ENCODE measurements at regions of chr2 and their contacts with region 1.

Region 1: DNA sequence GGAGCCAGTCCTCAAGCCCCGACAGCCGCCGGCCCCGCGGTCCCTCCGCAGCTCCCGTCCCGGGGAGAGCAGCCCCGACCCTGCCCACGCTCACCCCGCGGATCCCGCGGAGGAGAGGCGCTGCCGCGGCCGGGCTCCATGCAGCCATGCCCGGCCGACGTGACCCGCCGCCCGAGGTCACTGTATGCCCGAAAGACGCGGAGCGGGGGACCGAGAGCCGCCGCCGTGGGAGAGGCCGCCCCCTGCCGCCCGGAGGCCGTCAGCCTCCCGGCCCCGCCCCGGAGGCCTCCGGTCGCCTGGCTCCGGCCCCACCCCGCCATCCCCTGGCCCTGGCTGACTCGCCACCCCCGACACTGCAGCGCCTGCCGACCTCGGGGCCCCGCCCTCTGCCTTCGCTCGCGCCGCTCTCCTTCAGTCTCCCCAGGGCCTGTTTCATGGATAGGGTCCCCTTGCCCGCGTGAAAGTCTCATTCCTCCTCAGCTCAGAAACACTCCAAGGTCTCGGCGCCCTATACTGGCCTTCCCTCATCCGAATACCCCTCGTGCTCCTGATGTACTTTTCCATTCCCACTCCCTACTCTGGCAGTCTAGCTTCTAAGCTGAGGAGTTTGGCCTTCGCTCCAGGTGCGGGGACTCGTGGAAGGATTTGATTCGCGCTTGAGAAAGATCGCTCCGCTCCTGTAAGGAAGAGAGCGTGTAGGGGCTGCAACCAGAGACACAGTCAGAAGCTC is at the start of gene BOLA3:
- DNase-seq: peak; percentile 94 to 97 (median 97)
- ATAC-seq: peak; percentile 94
- H3K4me3 ChIP-seq: peak within 1 kb of the TSS; percentile 64
- H3K27ac ChIP-seq: peak within 1 kb of the TSS; percentile 80
- H3K4me1 ChIP-seq: peaks cover 31 to 36% of the 10 kb centered on the region in 2 experiments
- H3K27me3 ChIP-seq: no peaks in the 10 kb centered on the region
- CTCF ChIP-seq: peak; percentile 68 to 97 (median 88)
- EP300 ChIP-seq: 0 out of 2 replicates have a peak, but pooled peaks have one; percentile 16
- POLR2A ChIP-seq: peak; percentile 88
- RAD21 ChIP-seq: peak; percentile 54 to 63
- polyA plus RNA-seq, gene BOLA3: 328 to 385 TPM

Region 2: DNA sequence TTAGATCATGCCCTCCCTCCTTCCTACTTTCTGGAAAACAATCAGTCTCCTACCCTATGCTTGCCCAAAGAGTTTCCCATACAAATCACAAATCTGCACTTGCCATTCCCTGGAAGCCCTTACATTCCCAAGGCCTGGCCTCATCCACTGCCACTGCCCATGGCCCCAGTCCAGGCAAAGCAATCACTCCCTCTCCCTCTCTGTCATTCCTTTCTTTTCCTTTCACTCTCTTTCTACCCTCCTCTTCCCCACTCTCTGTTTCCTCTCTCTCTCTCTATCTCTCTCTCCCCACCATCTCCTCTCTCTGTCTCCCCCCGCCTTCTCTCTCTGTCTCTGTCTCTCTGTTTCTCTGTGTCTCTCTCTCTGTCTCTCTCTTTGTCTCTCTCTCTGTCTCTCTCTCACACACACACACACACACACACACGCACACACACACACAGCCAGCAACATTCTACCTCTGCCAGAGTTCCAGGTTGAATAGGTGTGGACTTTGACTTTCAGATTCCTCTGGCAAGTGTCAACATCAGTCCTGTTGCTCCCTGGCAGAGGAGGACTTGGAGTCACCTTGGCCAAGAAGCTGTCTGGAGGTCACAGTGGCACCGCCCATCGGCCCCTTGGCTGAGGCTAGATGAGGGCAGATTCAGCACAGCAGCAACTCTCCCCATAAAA is 462.0 kb before region 1 on chr2:
- CTCF ChIA-PET with region 1: no interaction called
- POLR2A ChIA-PET with region 1: interaction called, 3 read pairs
- in situ Hi-C with region 1: no loop called
- intact Hi-C with region 1: loop called (anchors 10 kb)
- DNase-seq: no peak
- ATAC-seq: no peak
- H3K4me3 ChIP-seq: no peak overlapping the region
- H3K27ac ChIP-seq: no peak overlapping the region
- H3K4me1 ChIP-seq: no peaks in the 10 kb centered on the region
- H3K27me3 ChIP-seq: no peaks in the 10 kb centered on the region
- CTCF ChIP-seq: no peak
- EP300 ChIP-seq: no peak
- POLR2A ChIP-seq: no peak
- RAD21 ChIP-seq: no peak

Region 3: GRCh38 chr2:73828818-73829570 is 318.9 kb before region 1 on chr2 and contains the start of gene STAMBP:
- CTCF ChIA-PET with region 1: no interaction called
- POLR2A ChIA-PET with region 1: no interaction called
- in situ Hi-C with region 1: no loop called
- intact Hi-C with region 1: loop called (anchors 10 kb)
- DNase-seq: peak; percentile 95 to 98 (median 96)
- ATAC-seq: peak; percentile 95
- H3K4me3 ChIP-seq: peak within 1 kb of the TSS; percentile 62
- H3K27ac ChIP-seq: peak within 1 kb of the TSS; percentile 89
- H3K4me1 ChIP-seq: peaks cover 7 to 13% of the 10 kb centered on the region in 2 experiments; a peak in 4 of 5 replicates
- H3K27me3 ChIP-seq: no peaks in the 10 kb centered on the region
- CTCF ChIP-seq: no peak
- EP300 ChIP-seq: no peak
- POLR2A ChIP-seq: peak; percentile 89
- RAD21 ChIP-seq: no peak
- polyA plus RNA-seq, gene STAMBP: 50.1 to 75.2 TPM

Region 4: GRCh38 chr2:73926493-73927338 is 221.2 kb before region 1 on chr2 and contains the start of gene DGUOK:
- CTCF ChIA-PET with region 1: interaction called, 4 read pairs
- POLR2A ChIA-PET with region 1: no interaction called
- in situ Hi-C with region 1: no loop called
- intact Hi-C with region 1: loop called (anchors 10 kb)
- DNase-seq: peak; percentile 94 to 99 (median 94)
- ATAC-seq: peak; percentile 98
- H3K4me3 ChIP-seq: peak within 1 kb of the TSS; percentile 81
- H3K27ac ChIP-seq: peak within 1 kb of the TSS; percentile 93
- H3K4me1 ChIP-seq: peaks cover 14 to 32% of the 10 kb centered on the region in 2 experiments; a peak in 4 of 5 replicates
- H3K27me3 ChIP-seq: no peaks in the 10 kb centered on the region
- CTCF ChIP-seq: no peak
- EP300 ChIP-seq: peak; percentile 66
- POLR2A ChIP-seq: peak; percentile 98
- RAD21 ChIP-seq: no peak
- polyA plus RNA-seq, gene DGUOK: 258 to 288 TPM

Region 5: GRCh38 chr2:74162951-74163350 is 15.1 kb after region 1 on chr2:
- CTCF ChIA-PET with region 1: no interaction called
- POLR2A ChIA-PET with region 1: interaction called, 32 read pairs
- in situ Hi-C with region 1: no loop called
- intact Hi-C with region 1: no loop called
- DNase-seq: no peak
- ATAC-seq: peak; percentile 58
- H3K4me3 ChIP-seq: no peak overlapping the region
- H3K27ac ChIP-seq: no peak overlapping the region
- H3K4me1 ChIP-seq: peaks cover 0 to 9% of the 10 kb centered on the region in 2 experiments; a peak in 3 of 5 replicates
- H3K27me3 ChIP-seq: no peaks in the 10 kb centered on the region
- CTCF ChIP-seq: no peak
- EP300 ChIP-seq: peak; percentile 48; the same call in 1 of the 2 replicates
- POLR2A ChIP-seq: no peak
- RAD21 ChIP-seq: no peak

Region 6: GRCh38 chr2:74178201-74179062 is 30.5 kb after region 1 on chr2 and contains the start of gene MOB1A:
- CTCF ChIA-PET with region 1: no interaction called
- POLR2A ChIA-PET with region 1: interaction called, 13 read pairs
- in situ Hi-C with region 1: no loop called
- intact Hi-C with region 1: no loop called
- DNase-seq: peak; percentile 96 to 99 (median 98)
- ATAC-seq: peak; percentile 93
- H3K4me3 ChIP-seq: peak within 1 kb of the TSS; percentile 81
- H3K27ac ChIP-seq: peak within 1 kb of the TSS; percentile 83
- H3K4me1 ChIP-seq: peaks cover 14 to 19% of the 10 kb centered on the region in 2 experiments
- H3K27me3 ChIP-seq: no peaks in the 10 kb centered on the region
- CTCF ChIP-seq: peak in 1 of 3 experiments; percentile 19; a peak in 1 of 6 replicates
- EP300 ChIP-seq: no peak
- POLR2A ChIP-seq: peak; percentile 91
- RAD21 ChIP-seq: peak in 1 of 2 experiments; percentile 12; a peak in 1 of 4 replicates
- polyA plus RNA-seq, gene MOB1A: 24.8 to 27.0 TPM

Region 7: GRCh38 chr2:74198461-74199274 is 50.8 kb after region 1 on chr2 and contains the start of gene MTHFD2:
- CTCF ChIA-PET with region 1: no interaction called
- POLR2A ChIA-PET with region 1: interaction called, 56 read pairs
- in situ Hi-C with region 1: no loop called
- intact Hi-C with region 1: loop called (anchors 2 kb)
- DNase-seq: peak; percentile 93 to 98 (median 95)
- ATAC-seq: peak; percentile 91
- H3K4me3 ChIP-seq: peak within 1 kb of the TSS; percentile 72
- H3K27ac ChIP-seq: peak within 1 kb of the TSS; percentile 100
- H3K4me1 ChIP-seq: peaks cover 19 to 32% of the 10 kb centered on the region in 2 experiments
- H3K27me3 ChIP-seq: no peaks in the 10 kb centered on the region
- CTCF ChIP-seq: peak; percentile 83 to 86 (median 85)
- EP300 ChIP-seq: peak; percentile 58
- POLR2A ChIP-seq: peak; percentile 99
- RAD21 ChIP-seq: peak; percentile 72 to 82
- polyA plus RNA-seq, gene MTHFD2: 476 to 520 TPM

Measured in K562 (cell line).